ENCODE measurements at regions of chr12 and their contacts with region 1.

Region 1: DNA sequence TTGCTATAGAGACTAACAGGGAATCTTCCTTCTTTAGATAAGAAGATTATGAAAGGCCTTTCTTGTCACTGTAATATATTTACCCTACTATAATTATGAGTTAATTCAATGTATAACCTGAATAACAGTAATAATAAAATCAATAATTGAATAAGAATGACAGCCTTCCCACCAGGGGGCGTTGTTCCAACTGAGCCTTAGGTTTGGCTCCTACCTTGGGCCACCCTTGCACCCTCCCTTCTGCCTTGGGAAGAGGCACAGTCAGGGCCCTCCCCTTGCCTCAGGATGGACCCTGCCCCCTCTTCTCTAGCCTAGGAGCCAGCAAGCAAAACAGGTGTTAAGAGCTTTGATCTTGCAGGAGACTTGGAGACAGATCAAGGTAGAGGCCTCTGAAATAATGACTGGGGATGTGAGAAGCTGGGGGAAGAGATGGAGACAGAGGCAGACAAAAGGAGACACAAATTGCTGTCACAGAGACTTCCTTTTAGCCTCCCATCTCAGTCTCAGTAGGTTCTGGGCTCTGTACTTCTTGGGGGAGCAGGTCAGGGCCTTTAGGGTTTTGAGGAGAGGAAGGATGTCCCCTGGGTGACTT is 40.1 kb upstream of the CISTR start:
- DNase-seq: peak; percentile 2 to 78
- H3K4me3 ChIP-seq: no peak overlapping the region
- H3K27ac ChIP-seq: no peak overlapping the region
- H3K4me1 ChIP-seq: peaks cover 0 to 2% (median 0%) of the 10 kb centered on the region in 4 experiments; a peak in 1 of 7 replicates
- H3K27me3 ChIP-seq: peaks cover 0 to 12% (median 2%) of the 10 kb centered on the region in 4 experiments; a peak in 4 of 7 replicates
- CTCF ChIP-seq: peak; percentile 59 to 66 (median 66)
- EP300 ChIP-seq: no peak
- POLR2A ChIP-seq: no peak
- RAD21 ChIP-seq: peak; percentile 53 to 62

Region 2: GRCh38 chr12:53722450-53723041 is 69.3 kb before region 1 on chr12:
- CTCF ChIA-PET with region 1: no interaction called
- POLR2A ChIA-PET with region 1: no interaction called
- DNase-seq: no peak
- H3K4me3 ChIP-seq: no peak overlapping the region
- H3K27ac ChIP-seq: no peak overlapping the region
- H3K4me1 ChIP-seq: peaks cover 0 to 7% (median 0%) of the 10 kb centered on the region in 4 experiments; a peak in 2 of 7 replicates
- H3K27me3 ChIP-seq: no peaks in the 10 kb centered on the region
- CTCF ChIP-seq: no peak
- EP300 ChIP-seq: no peak
- POLR2A ChIP-seq: no peak
- RAD21 ChIP-seq: no peak

Region 3: DNA sequence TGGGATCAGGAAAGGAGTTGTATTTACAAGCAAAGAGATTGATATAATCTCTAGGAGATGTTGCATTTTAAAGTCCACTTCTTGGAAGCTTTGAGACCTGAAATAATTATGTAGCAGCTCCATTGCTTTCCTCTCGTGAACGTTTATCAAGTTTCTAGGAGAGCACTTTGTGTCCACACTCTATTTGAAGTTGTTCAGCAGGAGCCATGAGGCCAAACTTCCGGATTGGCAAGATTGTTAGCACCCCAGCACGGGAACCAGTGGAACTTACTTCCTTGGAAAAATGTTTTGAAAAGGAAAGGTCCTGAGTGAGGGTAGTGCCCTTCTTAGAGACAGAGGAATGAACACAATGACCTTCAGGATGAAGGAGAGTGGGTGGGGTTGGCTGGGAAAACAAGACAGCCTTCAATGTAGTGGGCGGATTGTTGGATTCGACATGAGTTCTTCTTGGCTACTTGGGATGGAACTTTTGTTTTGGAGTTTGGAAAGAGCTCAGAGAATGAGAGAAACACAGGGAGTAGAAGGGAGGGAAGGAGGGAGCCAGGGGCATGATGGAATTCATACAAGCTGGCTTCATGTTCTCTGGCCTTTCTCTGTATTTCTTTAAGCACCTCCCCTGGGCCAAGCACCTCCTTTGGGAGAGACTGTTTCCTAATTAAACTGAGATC is 16.2 kb before region 1 on chr12:
- CTCF ChIA-PET with region 1: interaction called, 51 read pairs
- POLR2A ChIA-PET with region 1: no interaction called
- DNase-seq: no peak
- H3K4me3 ChIP-seq: no peak overlapping the region
- H3K27ac ChIP-seq: no peak overlapping the region
- H3K4me1 ChIP-seq: no peaks in the 10 kb centered on the region
- H3K27me3 ChIP-seq: no peaks in the 10 kb centered on the region
- CTCF ChIP-seq: no peak
- EP300 ChIP-seq: no peak
- POLR2A ChIP-seq: no peak
- RAD21 ChIP-seq: no peak

Region 4: GRCh38 chr12:53781228-53781801 is 10.5 kb before region 1 on chr12:
- CTCF ChIA-PET with region 1: interaction called, 51 read pairs
- POLR2A ChIA-PET with region 1: no interaction called
- DNase-seq: no peak
- H3K4me3 ChIP-seq: no peak overlapping the region
- H3K27ac ChIP-seq: no peak overlapping the region
- H3K4me1 ChIP-seq: peaks cover 0 to 5% (median under 1%) of the 10 kb centered on the region in 4 experiments; a peak in 2 of 7 replicates
- H3K27me3 ChIP-seq: peaks cover 0 to 2% (median 0%) of the 10 kb centered on the region in 4 experiments; a peak in 3 of 7 replicates
- CTCF ChIP-seq: no peak
- EP300 ChIP-seq: no peak
- POLR2A ChIP-seq: no peak
- RAD21 ChIP-seq: no peak

Region 5: DNA sequence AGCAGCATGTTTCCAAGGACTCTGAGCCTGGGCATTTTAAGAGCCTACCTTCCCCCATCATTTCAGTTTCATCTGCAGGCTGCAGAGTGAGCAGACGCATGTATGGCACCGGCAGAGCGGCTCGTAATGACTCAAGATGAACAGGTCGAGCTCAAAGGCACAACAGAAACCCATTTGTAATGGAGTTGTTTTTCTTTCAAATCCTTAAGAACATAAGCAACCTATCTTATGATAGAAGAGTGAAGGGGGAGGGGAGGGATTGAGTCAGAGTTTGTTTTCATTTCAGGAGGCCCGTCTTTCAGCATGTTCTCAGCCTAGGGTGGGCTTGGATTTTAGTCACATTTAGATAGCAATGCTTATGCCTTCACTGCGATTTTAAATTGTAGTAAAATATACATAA is 14.9 kb after region 1 on chr12:
- CTCF ChIA-PET with region 1: interaction called, 64 read pairs
- POLR2A ChIA-PET with region 1: no interaction called
- DNase-seq: no peak
- H3K4me3 ChIP-seq: no peak overlapping the region
- H3K27ac ChIP-seq: no peak overlapping the region
- H3K4me1 ChIP-seq: peaks cover 0 to 3% (median 0%) of the 10 kb centered on the region in 4 experiments; a peak in 1 of 7 replicates
- H3K27me3 ChIP-seq: peaks cover 0 to 9% (median 3%) of the 10 kb centered on the region in 4 experiments; a peak in 3 of 7 replicates
- CTCF ChIP-seq: no peak
- EP300 ChIP-seq: no peak
- POLR2A ChIP-seq: no peak
- RAD21 ChIP-seq: no peak

Region 6: DNA sequence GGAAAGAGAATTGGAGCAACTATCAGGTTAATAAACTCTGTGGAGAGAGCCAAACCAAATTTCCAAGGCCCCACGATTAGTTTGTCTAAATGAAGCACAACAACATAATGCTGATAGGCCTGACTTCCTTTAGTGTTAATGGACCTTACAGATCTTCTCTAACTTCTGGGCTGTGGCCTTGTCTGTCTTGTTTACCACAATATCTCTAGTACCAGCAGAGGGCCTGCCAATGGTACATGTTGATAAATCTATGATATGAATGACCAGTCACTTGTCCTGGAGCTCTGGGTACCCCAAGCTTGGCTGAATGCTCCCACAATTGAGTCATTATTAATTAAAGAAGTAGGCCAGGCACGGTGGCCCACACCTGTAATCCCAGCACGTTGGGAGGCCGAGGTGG is 38.8 kb after region 1 on chr12:
- CTCF ChIA-PET with region 1: interaction called, 20 read pairs
- POLR2A ChIA-PET with region 1: no interaction called
- DNase-seq: no peak
- H3K4me3 ChIP-seq: no peak overlapping the region
- H3K27ac ChIP-seq: no peak overlapping the region
- H3K4me1 ChIP-seq: no peaks in the 10 kb centered on the region; a peak in 1 of 7 replicates
- H3K27me3 ChIP-seq: no peaks in the 10 kb centered on the region
- CTCF ChIP-seq: no peak
- EP300 ChIP-seq: no peak
- POLR2A ChIP-seq: no peak
- RAD21 ChIP-seq: no peak

Region 7: DNA sequence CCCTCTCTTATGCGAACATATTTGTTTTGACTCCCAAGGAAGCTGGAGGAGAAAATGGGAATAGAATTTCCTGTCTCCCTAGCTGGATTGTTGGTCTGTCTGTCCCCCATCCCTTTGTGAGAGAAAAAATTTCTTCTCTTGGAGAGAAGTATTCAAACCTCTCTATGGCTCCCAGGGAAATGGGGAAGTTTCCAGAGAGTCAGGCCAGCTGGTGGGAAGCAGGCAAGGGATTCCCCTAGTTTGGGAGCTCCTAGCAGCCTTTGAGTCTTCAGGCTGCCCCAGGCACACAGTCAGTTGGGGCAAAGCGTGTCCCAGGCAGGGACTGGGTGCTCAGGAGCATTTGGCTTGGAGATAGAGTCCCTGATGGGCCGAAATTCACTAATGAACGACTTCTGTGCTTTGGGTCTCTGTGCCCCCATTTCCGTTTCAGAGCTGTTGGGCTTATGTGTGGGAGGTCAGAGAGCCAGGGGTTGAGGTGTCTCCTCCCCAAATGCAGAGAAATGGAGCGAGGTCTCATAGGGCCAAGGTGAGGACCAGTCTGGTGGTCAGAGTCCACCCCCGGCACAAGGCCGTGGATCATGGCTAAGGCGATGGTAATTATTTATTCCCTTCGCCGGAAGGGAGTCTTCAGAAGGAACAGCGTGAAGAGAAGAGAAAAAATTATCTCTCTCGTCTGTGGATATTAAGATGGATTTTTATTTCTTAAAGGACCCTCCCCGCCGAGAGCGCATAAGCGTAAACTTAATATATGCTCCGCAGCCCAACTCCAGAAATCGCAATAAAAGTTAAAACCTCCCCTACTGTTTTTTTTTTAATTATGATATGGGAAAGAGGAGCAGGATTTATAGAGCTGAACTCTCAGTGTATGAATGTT is 201.5 kb after region 1 on chr12:
- CTCF ChIA-PET with region 1: no interaction called
- POLR2A ChIA-PET with region 1: no interaction called
- DNase-seq: no peak
- H3K4me3 ChIP-seq: no peak overlapping the region
- H3K27ac ChIP-seq: no peak overlapping the region
- H3K4me1 ChIP-seq: peaks cover 0 to 15% (median 3%) of the 10 kb centered on the region in 4 experiments; a peak in 5 of 7 replicates
- H3K27me3 ChIP-seq: peaks cover 97 to 100% (median 100%) of the 10 kb centered on the region in 4 experiments
- CTCF ChIP-seq: no peak
- EP300 ChIP-seq: no peak
- POLR2A ChIP-seq: no peak
- RAD21 ChIP-seq: no peak

Measured in H1 (cell line).